Activated B cell treated with CpG ODN at 0.5 μM for 24 hours (primary cell): ENCODE measurements at regions of chr16 and their contacts with region 1.

Region 1: DNA sequence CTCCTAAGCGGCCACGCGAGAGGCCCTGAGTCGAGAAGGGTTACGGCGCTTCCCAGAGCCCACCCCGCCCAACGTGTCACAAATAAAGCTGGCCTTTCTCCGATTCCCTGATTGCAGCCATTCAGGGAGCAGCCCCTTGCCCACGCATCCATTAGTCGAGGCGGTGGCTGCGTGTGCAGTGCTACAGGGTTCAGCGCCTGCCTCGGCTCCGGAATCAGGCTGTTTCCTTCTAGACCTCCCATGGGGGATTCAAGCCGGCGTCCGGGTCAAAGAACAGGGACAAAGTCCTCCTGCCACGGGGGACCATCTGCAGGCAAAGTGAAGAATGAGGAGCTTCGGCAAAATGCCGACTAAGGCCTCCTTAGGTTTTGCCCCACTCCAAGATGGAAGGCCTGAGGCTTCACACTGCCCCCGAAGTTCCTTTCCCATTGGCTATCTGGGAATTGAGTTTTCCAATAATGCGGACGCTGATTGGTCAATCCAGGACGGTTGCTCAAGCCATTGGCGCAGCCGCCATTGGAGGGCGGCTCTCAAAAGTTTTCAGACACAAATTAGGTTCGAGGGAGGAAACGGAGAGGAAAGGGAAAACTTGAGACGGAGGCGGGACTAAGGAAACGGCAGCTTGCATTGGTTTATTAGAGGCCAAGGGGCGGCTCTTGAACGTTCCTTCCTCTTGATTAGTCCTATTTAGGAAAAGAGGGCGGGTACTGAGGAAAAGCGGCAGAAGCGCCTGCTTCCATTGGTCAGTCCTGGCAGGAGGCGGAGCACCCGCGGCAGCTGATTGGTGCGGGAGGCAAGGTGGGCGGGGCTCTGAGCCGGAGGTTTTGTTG is 430 bp upstream of the KATNB1 start:
- DNase-seq: peak; percentile 94
- ATAC-seq: peak; percentile 93
- H3K4me3 Mint-ChIP-seq: peak overlapping the region; percentile 95
- H3K27ac Mint-ChIP-seq: peak overlapping the region; percentile 98
- H3K4me1 Mint-ChIP-seq: peaks cover 30% of the 10 kb centered on the region
- H3K27me3 Mint-ChIP-seq: no peaks in the 10 kb centered on the region
- CTCF ChIP-seq: no peak

Region 2: GRCh38 chr16:56425439-56425832 is 1309.7 kb before region 1 on chr16 and contains the start of gene AMFR:
- CTCF ChIA-PET with region 1: no interaction called
- POLR2A ChIA-PET with region 1: no interaction called
- intact Hi-C with region 1: loop called (anchors 10 kb)
- DNase-seq: peak; percentile 82
- ATAC-seq: peak; percentile 87
- H3K4me3 Mint-ChIP-seq: peak within 1 kb of the TSS; percentile 96
- H3K27ac Mint-ChIP-seq: peak within 1 kb of the TSS; percentile 95
- H3K4me1 Mint-ChIP-seq: peaks cover 44% of the 10 kb centered on the region
- H3K27me3 Mint-ChIP-seq: no peaks in the 10 kb centered on the region
- CTCF ChIP-seq: no peak
- total RNA-seq, gene AMFR: 118 and 134 TPM in 2 replicates

Region 3: GRCh38 chr16:57447186-57447962 is 287.8 kb before region 1 on chr16 and contains the starts of genes CIAPIN1 and COQ9:
- CTCF ChIA-PET with region 1: no interaction called
- POLR2A ChIA-PET with region 1: interaction called, 7 read pairs
- intact Hi-C with region 1: loop called (anchors 1 kb)
- DNase-seq: peak; percentile 82
- ATAC-seq: peak; percentile 98
- H3K4me3 Mint-ChIP-seq: peak within 1 kb of the TSS; percentile 91
- H3K27ac Mint-ChIP-seq: peak within 1 kb of the TSS; percentile 84
- H3K4me1 Mint-ChIP-seq: peaks cover 19% of the 10 kb centered on the region
- H3K27me3 Mint-ChIP-seq: no peaks in the 10 kb centered on the region
- CTCF ChIP-seq: no peak
- total RNA-seq, gene CIAPIN1: 47.1 and 52.3 TPM in 2 replicates
- total RNA-seq, gene COQ9: 30.4 and 34.1 TPM in 2 replicates

Region 4: GRCh38 chr16:57535680-57536305 is 199.3 kb before region 1 on chr16:
- CTCF ChIA-PET with region 1: interaction called, 3 read pairs
- POLR2A ChIA-PET with region 1: interaction called, 7 read pairs
- intact Hi-C with region 1: loop called (anchors 1 kb)
- DNase-seq: peak; percentile 87
- ATAC-seq: peak; percentile 70
- H3K4me3 Mint-ChIP-seq: peak overlapping the region; percentile 85
- H3K27ac Mint-ChIP-seq: peak overlapping the region; percentile 89
- H3K4me1 Mint-ChIP-seq: peaks cover 83% of the 10 kb centered on the region
- H3K27me3 Mint-ChIP-seq: no peaks in the 10 kb centered on the region
- CTCF ChIP-seq: no peak

Region 5: GRCh38 chr16:57694725-57695679 is 40.1 kb before region 1 on chr16 and contains the start of gene DRC7:
- CTCF ChIA-PET with region 1: no interaction called
- POLR2A ChIA-PET with region 1: interaction called, 12 read pairs
- intact Hi-C with region 1: loop called (anchors 1 kb)
- DNase-seq: peak; percentile 25
- ATAC-seq: peak; percentile 66
- H3K4me3 Mint-ChIP-seq: peak within 1 kb of the TSS; percentile 83
- H3K27ac Mint-ChIP-seq: peak within 1 kb of the TSS; percentile 57
- H3K4me1 Mint-ChIP-seq: peaks cover 22% of the 10 kb centered on the region
- H3K27me3 Mint-ChIP-seq: no peaks in the 10 kb centered on the region
- CTCF ChIP-seq: no peak
- total RNA-seq, gene DRC7: not detected in 2 replicates

Region 6: GRCh38 chr16:57984331-57985203 is 249.4 kb after region 1 on chr16:
- CTCF ChIA-PET with region 1: no interaction called
- POLR2A ChIA-PET with region 1: no interaction called
- intact Hi-C with region 1: loop called (anchors 1 kb)
- DNase-seq: peak; percentile 82
- ATAC-seq: peak; percentile 99
- H3K4me3 Mint-ChIP-seq: peak overlapping the region; percentile 91
- H3K27ac Mint-ChIP-seq: no peak overlapping the region
- H3K4me1 Mint-ChIP-seq: peaks cover 14% of the 10 kb centered on the region
- H3K27me3 Mint-ChIP-seq: peaks cover 4% of the 10 kb centered on the region
- CTCF ChIP-seq: no peak

Region 7: DNA sequence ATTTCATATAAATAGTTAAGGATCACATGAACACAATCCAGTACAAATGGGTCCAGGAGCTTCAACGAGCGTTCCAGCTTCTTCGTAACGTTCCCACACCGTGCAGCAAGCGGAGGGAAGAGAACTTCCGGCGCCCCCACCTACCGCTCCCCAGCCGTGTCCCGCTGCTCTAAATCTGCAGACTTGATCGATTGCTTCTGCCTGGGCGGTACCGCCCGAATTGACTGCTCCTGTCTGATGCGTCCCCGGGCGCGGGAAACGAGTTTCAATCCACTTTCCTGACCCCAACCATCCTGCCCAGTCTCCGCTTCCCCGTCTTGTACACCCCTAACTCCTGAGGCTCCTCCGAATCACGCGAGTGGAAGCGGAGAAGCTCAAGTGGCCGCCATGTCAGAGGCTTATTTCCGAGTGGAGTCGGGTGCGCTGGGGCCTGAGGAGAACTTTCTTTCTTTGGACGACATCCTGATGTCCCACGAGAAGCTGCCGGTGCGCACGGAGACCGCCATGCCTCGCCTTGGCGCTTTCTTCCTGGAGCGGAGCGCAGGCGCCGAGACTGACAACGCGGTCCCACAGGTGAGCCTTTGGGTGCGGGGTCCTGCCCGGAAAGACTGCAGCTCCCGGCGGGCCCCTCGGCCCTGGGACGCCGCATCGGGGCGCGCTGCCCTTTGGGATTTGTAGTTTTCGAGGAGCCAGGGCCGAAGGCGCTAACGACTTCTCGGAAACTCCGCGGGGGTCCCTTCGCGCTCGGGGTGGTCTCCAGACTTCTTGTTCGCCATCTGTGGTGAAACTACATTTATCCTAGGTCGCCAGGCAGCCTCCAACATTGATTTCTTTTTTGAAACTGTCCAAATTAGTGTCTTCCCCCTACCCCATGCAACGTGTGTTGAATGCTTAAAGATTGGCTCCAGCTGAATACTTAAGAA is 657.3 kb after region 1 on chr16 and contains the start of gene GINS3:
- CTCF ChIA-PET with region 1: no interaction called
- POLR2A ChIA-PET with region 1: no interaction called
- intact Hi-C with region 1: loop called (anchors 1 kb)
- DNase-seq: peak; percentile 77
- ATAC-seq: peak; percentile 97
- H3K4me3 Mint-ChIP-seq: peak within 1 kb of the TSS; percentile 100
- H3K27ac Mint-ChIP-seq: peak within 1 kb of the TSS; percentile 97
- H3K4me1 Mint-ChIP-seq: peaks cover 15% of the 10 kb centered on the region
- H3K27me3 Mint-ChIP-seq: peaks cover 3% of the 10 kb centered on the region
- CTCF ChIP-seq: no peak
- total RNA-seq, gene GINS3: 5.3 and 6.9 TPM in 2 replicates